T-cell (primary cell): ENCODE measurements at regions of chr2 and their contacts with region 1.

Region 1: GRCh38 chr2:68925295-68925896 is 27.3 kb downstream of the GKN2 start:
- DNase-seq: peak in 30 of 35 experiments; percentile 21 to 83 (median 46)
- ATAC-seq: peak; percentile 68 to 83 (median 71)
- H3K4me3 ChIP-seq: no peak overlapping the region
- H3K4me3 Mint-ChIP-seq: no peak overlapping the region
- H3K27ac ChIP-seq: no peak overlapping the region
- H3K27ac Mint-ChIP-seq: no peak overlapping the region
- H3K4me1 ChIP-seq: no peaks in the 10 kb centered on the region
- H3K4me1 Mint-ChIP-seq: peaks cover 3 to 5% (median 4%) of the 10 kb centered on the region in 3 donors
- H3K27me3 ChIP-seq: peaks cover 0 to 11% of the 10 kb centered on the region in 2 experiments
- H3K27me3 Mint-ChIP-seq: peaks cover 3 to 4% of the 10 kb centered on the region in 2 donors

Region 2: GRCh38 chr2:68487773-68488355 is 437.5 kb before region 1 on chr2:
- CTCF ChIA-PET with region 1: interaction called, 3 to 50 read pairs
- POLR2A ChIA-PET with region 1: no interaction called
- DNase-seq: peak in 1 of 35 experiments; percentile 52
- ATAC-seq: peak in 1 of 4 experiments; percentile 54
- H3K4me3 ChIP-seq: no peak overlapping the region
- H3K4me3 Mint-ChIP-seq: no peak overlapping the region
- H3K27ac ChIP-seq: no peak overlapping the region
- H3K27ac Mint-ChIP-seq: peak overlapping the region in 1 of 2 donors; percentile 46
- H3K4me1 ChIP-seq: no peaks in the 10 kb centered on the region
- H3K4me1 Mint-ChIP-seq: peaks cover 4 to 6% (median 5%) of the 10 kb centered on the region in 3 donors
- H3K27me3 ChIP-seq: no peaks in the 10 kb centered on the region
- H3K27me3 Mint-ChIP-seq: no peaks in the 10 kb centered on the region

Region 3: DNA sequence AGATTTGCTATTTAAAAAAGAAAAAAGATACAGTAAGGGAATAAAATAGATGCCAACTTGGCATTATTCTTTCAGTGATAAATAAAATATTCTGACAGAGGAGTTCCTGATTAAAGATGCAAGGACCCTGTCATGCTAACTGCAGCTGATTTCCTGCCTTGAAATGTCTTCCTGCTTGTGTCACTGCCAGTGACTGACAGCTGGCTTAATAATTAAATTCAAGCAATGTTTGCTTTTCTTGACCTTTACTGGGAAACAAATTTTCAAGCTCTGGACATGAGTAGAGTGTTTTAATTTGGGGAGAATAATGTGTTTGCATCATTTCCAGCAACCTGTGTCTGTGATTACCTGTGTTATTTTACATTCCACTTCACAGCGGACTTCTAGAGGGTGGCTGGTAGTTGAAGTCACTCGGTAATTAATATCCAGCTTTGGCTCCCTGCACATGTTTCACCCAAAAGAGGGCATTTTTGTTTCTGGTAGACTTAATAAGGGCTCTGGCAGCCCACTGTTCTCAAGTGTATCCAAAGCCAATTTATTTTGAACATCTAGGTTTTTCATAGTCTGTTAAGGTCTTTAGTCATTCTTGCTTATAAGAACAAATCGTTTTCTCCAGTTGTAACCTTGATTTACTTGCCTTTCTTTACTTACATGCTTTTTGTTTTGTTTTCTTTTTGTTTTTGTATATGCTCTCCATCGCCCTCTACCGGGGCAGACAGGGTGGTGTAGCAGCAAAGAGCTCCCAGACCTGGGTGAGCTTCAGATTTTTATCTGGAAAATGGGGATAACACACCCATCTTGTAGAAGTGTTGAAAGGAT is 330.5 kb before region 1 on chr2:
- CTCF ChIA-PET with region 1: interaction called, 3 to 23 read pairs
- POLR2A ChIA-PET with region 1: no interaction called
- DNase-seq: peak in 32 of 35 experiments; percentile 9 to 75 (median 42)
- ATAC-seq: peak in 2 of 4 experiments; percentile 32 to 45
- H3K4me3 ChIP-seq: no peak overlapping the region
- H3K4me3 Mint-ChIP-seq: no peak overlapping the region
- H3K27ac ChIP-seq: no peak overlapping the region
- H3K27ac Mint-ChIP-seq: no peak overlapping the region
- H3K4me1 ChIP-seq: no peaks in the 10 kb centered on the region
- H3K4me1 Mint-ChIP-seq: peaks cover 7 to 11% (median 8%) of the 10 kb centered on the region in 3 donors
- H3K27me3 ChIP-seq: no peaks in the 10 kb centered on the region
- H3K27me3 Mint-ChIP-seq: peaks cover 2 to 18% of the 10 kb centered on the region in 2 donors

Region 4: DNA sequence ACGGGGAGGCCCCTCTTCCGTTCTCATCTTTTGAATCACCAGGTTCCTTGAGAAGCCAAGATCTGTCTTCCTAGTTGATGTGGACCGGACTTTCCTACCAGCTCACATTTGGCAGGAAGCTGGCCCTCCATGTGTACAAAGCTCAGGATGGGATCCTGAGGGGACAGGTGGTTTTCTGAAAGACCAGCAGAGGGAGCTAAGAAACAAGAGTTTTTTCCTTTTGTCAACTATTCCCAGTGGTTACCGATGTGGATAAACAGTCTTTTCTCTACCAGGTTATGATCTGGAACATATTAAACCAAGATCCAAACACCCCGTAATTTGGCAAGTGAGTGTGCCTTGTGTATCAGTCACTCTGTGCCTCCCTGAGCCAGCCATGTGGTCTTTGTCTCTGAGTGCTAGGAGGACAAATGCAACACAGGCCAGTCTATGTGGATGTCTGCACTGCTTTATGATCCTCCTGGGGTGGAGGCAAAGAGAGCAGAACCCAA is 215.9 kb before region 1 on chr2:
- CTCF ChIA-PET with region 1: interaction called, 4 to 47 read pairs
- POLR2A ChIA-PET with region 1: no interaction called
- DNase-seq: peak in 1 of 35 experiments; percentile 59
- ATAC-seq: peak; percentile 50 to 80 (median 68)
- H3K4me3 ChIP-seq: no peak overlapping the region
- H3K4me3 Mint-ChIP-seq: no peak overlapping the region
- H3K27ac ChIP-seq: no peak overlapping the region
- H3K27ac Mint-ChIP-seq: peak overlapping the region; percentile 6 to 42
- H3K4me1 ChIP-seq: peaks cover 3 to 5% of the 10 kb centered on the region in 2 experiments
- H3K4me1 Mint-ChIP-seq: peaks cover 16 to 33% (median 19%) of the 10 kb centered on the region in 3 donors
- H3K27me3 ChIP-seq: no peaks in the 10 kb centered on the region
- H3K27me3 Mint-ChIP-seq: no peaks in the 10 kb centered on the region

Region 5: GRCh38 chr2:68721482-68722101 is 203.8 kb before region 1 on chr2:
- CTCF ChIA-PET with region 1: interaction called in 1 of 2 experiments, 10 read pairs
- POLR2A ChIA-PET with region 1: no interaction called
- DNase-seq: peak in 21 of 35 experiments; percentile 23 to 75 (median 35)
- ATAC-seq: peak; percentile 80 to 86 (median 84)
- H3K4me3 ChIP-seq: peak overlapping the region in 1 of 2 donors; percentile 18
- H3K4me3 Mint-ChIP-seq: peak overlapping the region; percentile 66 to 73 (median 70)
- H3K27ac ChIP-seq: peak overlapping the region; percentile 77
- H3K27ac Mint-ChIP-seq: peak overlapping the region; percentile 97 to 98
- H3K4me1 ChIP-seq: peaks cover 57 to 81% of the 10 kb centered on the region in 2 experiments
- H3K4me1 Mint-ChIP-seq: peaks cover 91 to 96% (median 94%) of the 10 kb centered on the region in 3 donors
- H3K27me3 ChIP-seq: no peaks in the 10 kb centered on the region
- H3K27me3 Mint-ChIP-seq: peaks cover 0 to 1% of the 10 kb centered on the region in 2 donors

Region 6: GRCh38 chr2:68908392-68908970 is 16.9 kb before region 1 on chr2:
- CTCF ChIA-PET with region 1: interaction called in 1 of 2 experiments, 14 read pairs
- POLR2A ChIA-PET with region 1: interaction called in 1 of 2 experiments, 3 read pairs
- DNase-seq: peak; percentile 68 to 91 (median 82)
- ATAC-seq: peak; percentile 96 to 98 (median 97)
- H3K4me3 ChIP-seq: no peak overlapping the region
- H3K4me3 Mint-ChIP-seq: peak overlapping the region in 2 of 3 donors; percentile 11 to 63
- H3K27ac ChIP-seq: peak overlapping the region; percentile 79
- H3K27ac Mint-ChIP-seq: peak overlapping the region; percentile 94 to 95
- H3K4me1 ChIP-seq: peaks cover 27 to 49% of the 10 kb centered on the region in 2 experiments
- H3K4me1 Mint-ChIP-seq: peaks cover 33 to 41% (median 36%) of the 10 kb centered on the region in 3 donors
- H3K27me3 ChIP-seq: no peaks in the 10 kb centered on the region
- H3K27me3 Mint-ChIP-seq: no peaks in the 10 kb centered on the region

Region 7: GRCh38 chr2:69411120-69411519 is 485.7 kb after region 1 on chr2:
- CTCF ChIA-PET with region 1: no interaction called
- POLR2A ChIA-PET with region 1: no interaction called
- DNase-seq: no peak
- ATAC-seq: no peak
- H3K4me3 ChIP-seq: no peak overlapping the region
- H3K4me3 Mint-ChIP-seq: no peak overlapping the region
- H3K27ac ChIP-seq: no peak overlapping the region
- H3K27ac Mint-ChIP-seq: no peak overlapping the region
- H3K4me1 ChIP-seq: no peaks in the 10 kb centered on the region
- H3K4me1 Mint-ChIP-seq: peaks cover 0 to 4% (median 3%) of the 10 kb centered on the region in 3 donors
- H3K27me3 ChIP-seq: no peaks in the 10 kb centered on the region
- H3K27me3 Mint-ChIP-seq: no peaks in the 10 kb centered on the region